ENCODE measurements at regions of chrX and their contacts with region 1.

Region 1: GRCh38 chrX:24081661-24082264 is 27.0 kb downstream of the EIF2S3 start:
- DNase-seq: peak; percentile 82
- H3K4me3 Mint-ChIP-seq: peak overlapping the region; percentile 62
- H3K27ac Mint-ChIP-seq: peak overlapping the region; percentile 45
- H3K4me1 Mint-ChIP-seq: peaks cover 10% of the 10 kb centered on the region
- H3K27me3 Mint-ChIP-seq: no peaks in the 10 kb centered on the region

Region 2: GRCh38 chrX:24054182-24055042 is 27.4 kb before region 1 on chrX and contains the start of gene EIF2S3:
- intact Hi-C with region 1: loop called (anchors 1 kb)
- DNase-seq: peak; percentile 95
- H3K4me3 Mint-ChIP-seq: no peak within 1 kb of the TSS
- H3K27ac Mint-ChIP-seq: peak within 1 kb of the TSS; percentile 100
- H3K4me1 Mint-ChIP-seq: peaks cover 6% of the 10 kb centered on the region
- H3K27me3 Mint-ChIP-seq: no peaks in the 10 kb centered on the region
- total RNA-seq, gene EIF2S3: 207 and 214 TPM in 2 replicates

Region 3: GRCh38 chrX:24169211-24169610 is 87.4 kb after region 1 on chrX:
- intact Hi-C with region 1: loop called (anchors 2 kb)
- DNase-seq: no peak
- H3K4me3 Mint-ChIP-seq: peak overlapping the region; percentile 72
- H3K27ac Mint-ChIP-seq: peak overlapping the region; percentile 92
- H3K4me1 Mint-ChIP-seq: peaks cover 37% of the 10 kb centered on the region
- H3K27me3 Mint-ChIP-seq: no peaks in the 10 kb centered on the region

Region 4: DNA sequence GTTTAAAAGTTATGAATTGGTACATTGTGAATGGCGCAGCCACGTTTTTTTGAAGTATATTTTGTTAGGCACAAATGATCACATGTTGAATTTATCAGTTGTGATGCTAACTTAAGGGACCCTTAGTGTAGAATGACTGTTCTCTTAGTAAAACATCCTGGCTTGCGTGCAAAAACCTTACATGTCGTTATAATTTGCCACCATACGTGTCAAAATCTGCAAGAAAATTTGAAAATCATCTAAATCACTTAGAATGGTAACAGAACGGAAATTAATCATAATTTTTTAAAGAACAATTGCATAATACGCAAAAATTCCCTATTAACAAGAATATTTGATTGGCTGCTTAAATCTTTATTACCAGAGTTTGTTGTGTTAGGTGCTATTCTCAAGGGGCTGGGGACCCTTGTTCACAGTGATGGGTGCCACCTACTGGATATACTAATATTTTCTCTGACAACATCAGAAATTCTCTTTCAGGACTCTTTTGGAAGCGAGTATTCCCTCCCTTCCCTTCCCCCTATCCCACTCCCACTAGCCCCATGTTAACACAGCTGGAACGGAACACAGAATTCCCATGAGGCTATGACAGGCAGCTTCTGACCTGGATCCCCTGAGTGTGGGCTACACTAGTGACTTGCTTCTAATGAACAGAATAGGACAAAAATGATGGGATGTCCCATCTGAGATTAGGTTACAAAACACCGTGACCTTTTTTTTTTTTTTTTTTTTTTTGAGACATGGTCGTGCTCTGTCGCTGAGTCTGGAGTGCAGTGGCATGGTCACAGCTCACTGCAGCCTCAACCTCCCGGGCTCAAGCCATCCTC is 160.3 kb after region 1 on chrX:
- intact Hi-C with region 1: loop called (anchors 1 kb)
- DNase-seq: peak; percentile 54
- H3K4me3 Mint-ChIP-seq: no peak overlapping the region
- H3K27ac Mint-ChIP-seq: no peak overlapping the region
- H3K4me1 Mint-ChIP-seq: peaks cover 11% of the 10 kb centered on the region
- H3K27me3 Mint-ChIP-seq: peaks cover 4% of the 10 kb centered on the region

Measured in activated CD4-positive, alpha-beta T cell treated with anti-CD3 and anti-CD28 coated beads, Interleukin-2, amount 10 ng/mL, durations not matched to agents 24 days and 14 days (primary cell).